ENCODE measurements at regions of chr18 and their contacts with region 1.

Region 1: DNA sequence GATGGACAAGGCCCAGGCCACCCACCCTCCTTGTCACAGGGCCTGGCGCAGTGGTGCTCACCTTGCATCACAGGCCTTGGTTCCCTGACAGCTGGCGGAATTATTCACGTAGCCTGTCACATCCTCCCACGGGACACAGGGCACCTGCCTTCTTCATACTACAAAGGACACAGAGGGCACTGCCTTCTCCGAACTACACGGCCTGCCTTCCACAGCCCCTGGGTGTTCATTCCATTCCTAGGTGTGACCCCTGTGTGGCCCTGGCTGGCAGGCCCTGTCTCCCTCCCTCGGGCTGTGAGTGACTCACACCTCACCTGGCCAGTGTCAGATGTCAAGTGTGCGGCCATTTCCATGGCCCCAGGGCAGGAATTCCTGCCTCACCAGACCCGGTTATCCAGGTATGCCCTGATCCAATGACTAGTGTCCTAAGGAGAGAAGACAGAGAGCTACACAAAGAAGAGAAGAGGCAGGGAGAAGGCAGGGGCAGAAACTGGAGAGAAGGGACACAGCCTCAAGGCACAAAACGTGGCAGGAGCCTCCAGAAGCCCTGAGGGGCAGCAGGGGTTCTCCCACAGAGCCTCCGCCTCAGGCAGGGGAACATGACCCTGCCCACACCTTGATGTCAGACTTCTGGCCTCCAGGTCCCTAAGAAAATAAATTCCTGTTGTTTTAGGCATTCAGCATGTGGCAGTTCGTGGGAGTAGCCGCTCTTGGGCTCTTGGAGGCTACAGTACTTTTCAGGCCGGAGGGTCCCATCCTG is 43.4 kb downstream of the MBP start:
- DNase-seq: peak; percentile 96 to 99
- H3K4me3 ChIP-seq: peak overlapping the region; percentile 25; the same call in 1 of the 2 replicates
- H3K27ac ChIP-seq: peak overlapping the region; percentile 95
- H3K4me1 ChIP-seq: peaks cover 71% of the 10 kb centered on the region
- H3K27me3 ChIP-seq: no peaks in the 10 kb centered on the region
- CTCF ChIP-seq: no peak

Region 2: GRCh38 chr18:77065221-77065981 is 23.7 kb before region 1 on chr18:
- CTCF ChIA-PET with region 1: no interaction called
- POLR2A ChIA-PET with region 1: no interaction called
- intact Hi-C with region 1: loop called (anchors 1 kb)
- DNase-seq: peak; percentile 54 to 97
- H3K4me3 ChIP-seq: no peak overlapping the region
- H3K27ac ChIP-seq: peak overlapping the region; percentile 97
- H3K4me1 ChIP-seq: peaks cover 84% of the 10 kb centered on the region
- H3K27me3 ChIP-seq: no peaks in the 10 kb centered on the region
- CTCF ChIP-seq: no peak